CD8-positive, alpha-beta memory T cell (primary cell): ENCODE measurements at regions of chr3 and their contacts with region 1.

Region 1: GRCh38 chr3:71135373-71136088 is 448.0 kb downstream of the FOXP1 start:
- DNase-seq: no peak
- H3K4me3 ChIP-seq: no peak overlapping the region
- H3K4me3 Mint-ChIP-seq: no peak overlapping the region
- H3K27ac ChIP-seq: no peak overlapping the region
- H3K27ac Mint-ChIP-seq: peak overlapping the region in 4 of 8 donors; percentile 21 to 70 (median 36)
- H3K4me1 ChIP-seq: peaks cover 63% of the 10 kb centered on the region
- H3K4me1 Mint-ChIP-seq: peaks cover 43 to 76% (median 70%) of the 10 kb centered on the region in 3 donors
- H3K27me3 ChIP-seq: no peaks in the 10 kb centered on the region
- H3K27me3 Mint-ChIP-seq: no peaks in the 10 kb centered on the region

Region 2: GRCh38 chr3:71232895-71233294 is 97.4 kb after region 1 on chr3:
- CTCF ChIA-PET with region 1: no interaction called
- POLR2A ChIA-PET with region 1: interaction called, 15 read pairs
- DNase-seq: no peak
- H3K4me3 ChIP-seq: no peak overlapping the region
- H3K4me3 Mint-ChIP-seq: no peak overlapping the region
- H3K27ac ChIP-seq: no peak overlapping the region
- H3K27ac Mint-ChIP-seq: no peak overlapping the region
- H3K4me1 ChIP-seq: peaks cover 46% of the 10 kb centered on the region
- H3K4me1 Mint-ChIP-seq: peaks cover 14 to 36% (median 36%) of the 10 kb centered on the region in 3 donors
- H3K27me3 ChIP-seq: no peaks in the 10 kb centered on the region
- H3K27me3 Mint-ChIP-seq: no peaks in the 10 kb centered on the region